ENCODE measurements at regions of chr11 and their contacts with region 1.

Region 1: GRCh38 chr11:69642913-69643632 is 2.1 kb downstream of the CCND1 start:
- DNase-seq: peak; percentile 86
- ATAC-seq: peak; percentile 80
- H3K4me3 Mint-ChIP-seq: peak overlapping the region; percentile 83
- H3K27ac Mint-ChIP-seq: no peak overlapping the region
- H3K4me1 Mint-ChIP-seq: peaks cover 32% of the 10 kb centered on the region
- H3K27me3 Mint-ChIP-seq: peaks cover 11% of the 10 kb centered on the region
- CTCF ChIP-seq: peak; percentile 68

Region 2: GRCh38 chr11:68459886-68460740 is 1183.0 kb before region 1 on chr11:
- CTCF ChIA-PET with region 1: no interaction called
- POLR2A ChIA-PET with region 1: no interaction called
- intact Hi-C with region 1: loop called (anchors 2 kb)
- DNase-seq: peak; percentile 81
- ATAC-seq: peak; percentile 92
- H3K4me3 Mint-ChIP-seq: peak overlapping the region; percentile 94
- H3K27ac Mint-ChIP-seq: peak overlapping the region; percentile 97
- H3K4me1 Mint-ChIP-seq: peaks cover 39% of the 10 kb centered on the region
- H3K27me3 Mint-ChIP-seq: no peaks in the 10 kb centered on the region
- CTCF ChIP-seq: no peak

Region 3: GRCh38 chr11:68751004-68751856 is 891.8 kb before region 1 on chr11 and contains the start of gene TESMIN:
- CTCF ChIA-PET with region 1: no interaction called
- POLR2A ChIA-PET with region 1: no interaction called
- intact Hi-C with region 1: loop called (anchors 10 kb)
- DNase-seq: peak; percentile 90
- ATAC-seq: peak; percentile 99
- H3K4me3 Mint-ChIP-seq: peak within 1 kb of the TSS; percentile 77
- H3K27ac Mint-ChIP-seq: no peak within 1 kb of the TSS
- H3K4me1 Mint-ChIP-seq: peaks cover 11% of the 10 kb centered on the region
- H3K27me3 Mint-ChIP-seq: no peaks in the 10 kb centered on the region
- CTCF ChIP-seq: no peak
- total RNA-seq, gene TESMIN: 1.8 and 3.0 TPM in 2 replicates

Region 4: GRCh38 chr11:69048718-69049489 is 594.2 kb before region 1 on chr11 and contains the start of gene TPCN2:
- CTCF ChIA-PET with region 1: interaction called, 5 read pairs
- POLR2A ChIA-PET with region 1: no interaction called
- intact Hi-C with region 1: loop called (anchors 2 kb)
- DNase-seq: peak; percentile 89
- ATAC-seq: peak; percentile 99
- H3K4me3 Mint-ChIP-seq: peak within 1 kb of the TSS; percentile 81
- H3K27ac Mint-ChIP-seq: peak within 1 kb of the TSS; percentile 70
- H3K4me1 Mint-ChIP-seq: peaks cover 47% of the 10 kb centered on the region
- H3K27me3 Mint-ChIP-seq: peaks cover 8% of the 10 kb centered on the region
- CTCF ChIP-seq: no peak
- total RNA-seq, gene TPCN2: 29.1 and 35.4 TPM in 2 replicates

Region 5: DNA sequence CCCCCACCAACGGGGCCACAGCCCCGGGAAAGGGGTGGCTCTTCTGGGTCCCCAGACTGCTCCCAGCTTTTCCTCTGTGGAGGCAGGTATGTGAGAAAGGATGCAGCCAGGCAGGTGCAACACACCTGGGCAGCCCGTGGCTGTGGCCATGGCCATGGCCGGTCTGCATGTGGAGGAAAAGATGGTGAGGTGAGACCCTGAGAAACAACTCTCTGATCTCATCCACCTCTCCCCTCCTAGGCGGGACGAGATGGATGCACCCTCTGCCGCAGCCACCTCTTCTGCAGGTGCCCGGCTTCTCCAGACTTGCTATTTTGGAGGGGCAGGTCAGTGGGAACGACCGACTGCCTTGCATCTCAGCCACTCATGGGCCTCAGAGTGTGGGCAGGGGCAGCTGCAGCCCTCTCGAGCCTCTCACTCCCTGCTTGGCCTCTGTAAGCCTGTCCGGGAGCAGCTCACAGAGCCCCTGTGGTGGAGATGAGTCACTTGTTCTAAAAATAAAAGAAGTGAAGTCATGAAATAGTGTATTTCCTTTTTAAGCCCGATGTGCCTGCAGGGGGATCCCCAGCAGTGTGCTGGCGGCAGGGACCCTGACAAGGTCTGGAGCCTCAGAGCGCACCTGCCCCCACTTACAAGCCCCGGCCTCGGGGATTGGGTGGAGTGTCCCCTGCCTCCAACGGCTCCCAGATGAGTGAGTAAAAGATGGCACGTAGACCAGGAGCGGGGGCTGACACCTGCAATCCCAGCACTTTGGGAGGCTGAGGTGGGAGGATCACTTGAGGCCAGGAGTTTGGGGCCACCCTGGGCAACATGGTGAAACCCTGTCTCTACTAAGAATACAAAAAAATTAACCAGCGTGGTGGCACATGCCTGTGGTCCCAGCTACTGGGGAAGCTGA is 476.6 kb before region 1 on chr11:
- CTCF ChIA-PET with region 1: no interaction called
- POLR2A ChIA-PET with region 1: no interaction called
- intact Hi-C with region 1: loop called (anchors 2 kb)
- DNase-seq: peak; percentile 37
- ATAC-seq: peak; percentile 94
- H3K4me3 Mint-ChIP-seq: peak overlapping the region; percentile 62
- H3K27ac Mint-ChIP-seq: peak overlapping the region; percentile 76
- H3K4me1 Mint-ChIP-seq: peaks cover 18% of the 10 kb centered on the region
- H3K27me3 Mint-ChIP-seq: no peaks in the 10 kb centered on the region
- CTCF ChIP-seq: no peak

Region 6: GRCh38 chr11:69670158-69670845 is 27.2 kb after region 1 on chr11:
- CTCF ChIA-PET with region 1: interaction called, 13 read pairs
- POLR2A ChIA-PET with region 1: interaction called, 8 read pairs
- intact Hi-C with region 1: loop called (anchors 1 kb)
- DNase-seq: peak; percentile 58
- ATAC-seq: peak; percentile 31
- H3K4me3 Mint-ChIP-seq: peak overlapping the region; percentile 24
- H3K27ac Mint-ChIP-seq: no peak overlapping the region
- H3K4me1 Mint-ChIP-seq: peaks cover 28% of the 10 kb centered on the region
- H3K27me3 Mint-ChIP-seq: peaks cover under 1% of the 10 kb centered on the region
- CTCF ChIP-seq: peak; percentile 27

Measured in activated B cell treated with CpG ODN at 0.5 μM for 24 hours (primary cell).